ENCODE measurements at regions of chr2 and their contacts with region 1.

Region 1: GRCh38 chr2:190534310-190535120 is at the start of gene NEMP2:
- DNase-seq: peak; percentile 84 to 90
- ATAC-seq: peak; percentile 94 to 96 (median 96)
- H3K4me3 ChIP-seq: peak within 1 kb of the TSS; percentile 93
- H3K27ac ChIP-seq: peak within 1 kb of the TSS; percentile 94
- H3K4me1 ChIP-seq: no peaks in the 10 kb centered on the region
- H3K27me3 ChIP-seq: no peaks in the 10 kb centered on the region
- CTCF ChIP-seq: peak; percentile 11
- total RNA-seq, gene NEMP2: 0.86 to 2.0 (median 1.3) TPM

Region 2: GRCh38 chr2:190648289-190649034 is 113.9 kb after region 1 on chr2:
- intact Hi-C with region 1: loop called (anchors 2 to 5 kb)
- DNase-seq: peak; percentile 92 to 93
- ATAC-seq: peak; percentile 86 to 88 (median 87)
- H3K4me3 ChIP-seq: peak overlapping the region; percentile 91
- H3K27ac ChIP-seq: peak overlapping the region; percentile 79
- H3K4me1 ChIP-seq: peaks cover 8% of the 10 kb centered on the region
- H3K27me3 ChIP-seq: no peaks in the 10 kb centered on the region
- CTCF ChIP-seq: no peak

Region 3: GRCh38 chr2:190683802-190684201 is 149.3 kb after region 1 on chr2:
- intact Hi-C with region 1: loop called in 1 of 2 experiments (anchors 1 kb)
- DNase-seq: no peak
- ATAC-seq: no peak
- H3K4me3 ChIP-seq: no peak overlapping the region
- H3K27ac ChIP-seq: no peak overlapping the region
- H3K4me1 ChIP-seq: no peaks in the 10 kb centered on the region
- H3K27me3 ChIP-seq: no peaks in the 10 kb centered on the region
- CTCF ChIP-seq: no peak